Common myeloid progenitor, CD34-positive (primary cell): ENCODE measurements at regions of chr7 and their contacts with region 1.

Region 1: GRCh38 chr7:36315309-36316133 is 74.1 kb upstream of the ANLN start:
- DNase-seq: no peak
- H3K4me3 ChIP-seq: no peak overlapping the region
- H3K27ac ChIP-seq: no peak overlapping the region
- H3K4me1 ChIP-seq: no peaks in the 10 kb centered on the region
- H3K27me3 ChIP-seq: no peaks in the 10 kb centered on the region

Region 2: DNA sequence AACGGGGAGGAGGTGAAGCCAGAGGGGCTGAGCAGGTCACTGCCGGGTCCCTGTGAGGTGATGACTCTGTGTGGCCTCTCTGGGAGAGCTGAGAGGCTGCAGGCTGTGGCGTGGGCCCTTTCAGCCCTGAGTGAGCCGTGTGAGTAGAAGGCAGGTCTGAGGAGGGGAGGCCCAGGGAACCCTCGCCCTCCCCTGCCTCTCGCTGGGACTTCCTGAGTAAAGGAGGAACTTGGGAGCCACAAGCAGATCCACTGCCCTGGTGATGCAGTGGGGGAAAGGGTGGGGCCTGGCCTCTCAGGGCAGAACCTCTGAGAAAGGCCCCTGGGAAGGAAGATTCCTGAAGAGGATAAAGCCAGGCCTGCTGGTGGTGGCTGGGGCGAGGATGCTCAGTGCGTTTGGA is 139.6 kb before region 1 on chr7:
- CTCF ChIA-PET with region 1: no interaction called
- POLR2A ChIA-PET with region 1: no interaction called
- DNase-seq: peak; percentile 67 to 84 (median 76)
- H3K4me3 ChIP-seq: peak overlapping the region in 5 of 7 experiments; percentile 6 to 40 (median 34)
- H3K27ac ChIP-seq: peak overlapping the region; percentile 52 to 75
- H3K4me1 ChIP-seq: peaks cover 0 to 74% (median 28%) of the 10 kb centered on the region in 4 experiments
- H3K27me3 ChIP-seq: no peaks in the 10 kb centered on the region

Region 3: DNA sequence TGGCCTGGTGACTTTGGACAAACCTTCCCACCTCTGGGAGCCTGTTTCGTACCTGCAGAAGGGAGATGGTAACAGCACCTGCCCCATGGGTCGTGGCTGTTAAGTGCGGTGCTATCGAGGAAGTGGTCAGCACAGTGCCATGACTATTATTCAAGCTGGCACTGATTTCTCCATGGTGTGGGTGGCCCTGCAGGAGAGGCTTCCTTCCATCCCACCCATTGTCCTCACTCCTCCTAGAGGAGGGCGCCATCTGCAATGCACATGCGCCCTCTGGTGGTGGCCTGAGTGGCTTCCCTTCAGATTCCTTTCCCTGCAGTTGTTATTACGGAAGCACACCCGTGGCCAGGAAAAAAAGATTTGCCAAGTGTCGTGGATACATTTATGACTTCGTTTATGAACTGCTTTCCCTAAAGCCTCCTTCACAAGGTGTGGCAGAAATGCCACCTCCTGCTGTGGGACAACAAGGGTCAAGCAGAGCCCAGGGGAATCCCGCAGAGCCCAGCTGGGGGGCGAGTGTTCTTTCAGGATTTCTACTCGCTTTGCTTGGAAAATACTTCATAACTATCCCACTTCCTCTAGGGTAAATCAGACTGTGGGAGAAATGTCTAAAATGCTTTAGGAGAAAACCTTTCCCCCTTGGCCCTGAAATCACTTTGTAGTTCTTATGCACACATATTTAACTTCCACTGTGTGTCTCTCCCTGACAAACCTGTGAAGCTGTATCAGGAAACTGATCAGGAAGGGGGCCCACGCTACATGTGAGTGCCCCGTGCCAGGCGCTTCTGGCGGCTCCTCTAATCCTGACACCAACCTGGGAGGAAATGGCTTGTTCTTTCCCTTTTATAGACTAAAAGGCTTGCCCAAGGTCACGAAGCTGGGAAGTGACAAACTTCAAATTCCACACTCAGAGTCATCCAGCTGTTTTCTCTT is 23.9 kb before region 1 on chr7:
- CTCF ChIA-PET with region 1: interaction called, 30 read pairs
- POLR2A ChIA-PET with region 1: no interaction called
- DNase-seq: peak; percentile 78 to 83 (median 81)
- H3K4me3 ChIP-seq: peak overlapping the region in 6 of 7 experiments; percentile 50 to 77 (median 68)
- H3K27ac ChIP-seq: peak overlapping the region; percentile 28 to 51
- H3K4me1 ChIP-seq: peaks cover 14 to 34% (median 29%) of the 10 kb centered on the region in 4 experiments
- H3K27me3 ChIP-seq: no peaks in the 10 kb centered on the region

Region 4: DNA sequence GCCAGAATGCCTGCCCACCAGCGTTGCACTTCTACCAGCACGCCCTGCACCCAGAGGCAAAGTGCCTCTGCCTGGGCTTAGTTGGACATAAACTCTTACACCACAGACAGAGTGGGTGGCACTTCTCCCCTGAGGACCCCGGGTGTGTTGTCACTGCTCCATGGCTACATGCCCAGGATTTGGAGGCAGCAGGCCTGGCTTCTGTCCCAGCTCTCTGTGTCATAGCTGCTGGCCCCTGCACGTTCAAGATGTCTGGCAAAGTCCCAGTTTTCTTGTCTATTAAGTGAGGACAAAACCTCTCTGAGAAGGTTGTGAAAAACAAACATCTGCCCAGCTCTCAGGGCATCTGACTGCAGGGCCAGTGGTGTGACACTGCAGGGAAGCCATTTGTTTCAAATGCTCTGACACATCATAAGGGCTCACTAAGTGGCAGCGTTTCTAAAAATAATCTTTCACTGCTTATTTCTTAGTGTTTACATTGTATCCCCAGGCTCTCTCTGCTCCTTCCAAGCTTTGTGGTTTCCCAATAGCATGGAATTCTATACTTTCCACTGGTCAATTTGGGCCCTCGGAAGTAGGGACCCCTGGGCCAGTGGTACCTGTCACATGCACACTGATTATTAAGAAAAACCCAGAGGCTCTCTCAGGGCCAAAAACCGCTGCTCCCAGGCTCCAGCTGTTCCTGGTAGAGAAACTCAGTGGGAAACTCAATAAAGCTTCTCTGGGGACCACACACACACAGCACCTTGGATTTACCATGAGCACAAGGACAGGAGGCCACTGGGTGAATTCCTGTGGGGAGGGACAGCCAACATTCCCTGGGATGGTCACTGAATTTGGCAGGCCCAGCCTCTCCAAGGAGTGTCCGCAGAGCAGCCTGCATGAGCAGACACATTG is 12.1 kb before region 1 on chr7:
- CTCF ChIA-PET with region 1: interaction called, 64 read pairs
- POLR2A ChIA-PET with region 1: no interaction called
- DNase-seq: peak; percentile 50 to 88 (median 83)
- H3K4me3 ChIP-seq: peak overlapping the region in 1 of 7 experiments; percentile 2
- H3K27ac ChIP-seq: peak overlapping the region; percentile 1 to 67
- H3K4me1 ChIP-seq: peaks cover 0 to 20% (median 1%) of the 10 kb centered on the region in 4 experiments
- H3K27me3 ChIP-seq: no peaks in the 10 kb centered on the region